AG04450 (cell line): ENCODE measurements at regions of chr6 and their contacts with region 1.

Region 1: DNA sequence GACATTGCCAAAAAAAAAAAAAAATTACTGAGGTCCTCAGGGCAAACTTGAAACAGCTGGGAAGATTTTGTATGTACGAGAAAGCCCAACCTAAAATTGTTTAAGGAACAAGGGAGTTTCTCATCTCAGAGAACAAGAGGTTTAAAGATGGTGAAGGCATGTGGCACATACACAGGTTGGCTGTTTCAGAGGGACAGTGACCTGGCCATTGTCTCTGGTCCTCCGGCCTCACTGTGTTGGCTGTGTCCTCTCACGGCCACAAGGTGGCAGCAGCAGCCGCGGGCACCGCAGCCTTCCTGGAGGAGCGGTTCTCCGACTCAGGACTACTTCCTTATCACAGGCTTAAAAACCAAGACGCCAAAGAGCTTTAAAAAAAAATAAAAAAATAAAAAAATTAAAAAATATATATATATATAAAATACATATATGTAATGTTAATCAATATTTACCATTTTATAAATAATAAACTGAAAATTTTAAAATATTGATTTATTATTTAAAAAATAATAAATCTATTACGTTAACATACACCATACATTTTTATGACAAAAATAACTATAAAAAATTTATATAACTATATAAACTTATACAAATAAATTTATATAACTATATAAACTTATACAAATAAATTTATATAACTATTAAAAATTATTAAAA is 52.8 kb downstream of the GTF2H5 start:
- DNase-seq: no peak
- H3K4me3 ChIP-seq: no peak overlapping the region
- H3K27ac ChIP-seq: no peak overlapping the region
- H3K27me3 ChIP-seq: no peaks in the 10 kb centered on the region
- CTCF ChIP-seq: peak; percentile 92

Region 2: DNA sequence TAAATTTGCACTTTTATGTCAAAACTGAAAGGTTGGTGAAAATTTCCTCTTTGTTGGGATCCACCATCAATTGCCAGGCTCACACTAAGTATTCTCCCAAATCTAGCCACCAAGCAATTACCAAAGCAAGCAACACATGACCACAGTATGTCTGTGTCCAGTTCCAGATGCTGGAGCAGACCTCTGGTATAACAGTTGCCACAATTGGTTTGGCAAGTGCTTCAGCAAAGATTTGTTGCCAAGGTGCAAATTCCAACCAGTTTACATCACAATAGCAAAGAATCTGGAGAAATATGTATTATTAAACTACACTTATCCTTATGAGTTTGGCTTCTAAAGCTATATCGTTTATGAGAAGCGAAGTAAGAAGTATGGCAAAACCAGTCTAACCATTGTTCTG is 46.4 kb before region 1 on chr6:
- CTCF ChIA-PET with region 1: no interaction called
- POLR2A ChIA-PET with region 1: no interaction called
- DNase-seq: peak; percentile 80
- H3K4me3 ChIP-seq: no peak overlapping the region
- H3K27ac ChIP-seq: no peak overlapping the region
- H3K27me3 ChIP-seq: no peaks in the 10 kb centered on the region
- CTCF ChIP-seq: no peak

Region 3: DNA sequence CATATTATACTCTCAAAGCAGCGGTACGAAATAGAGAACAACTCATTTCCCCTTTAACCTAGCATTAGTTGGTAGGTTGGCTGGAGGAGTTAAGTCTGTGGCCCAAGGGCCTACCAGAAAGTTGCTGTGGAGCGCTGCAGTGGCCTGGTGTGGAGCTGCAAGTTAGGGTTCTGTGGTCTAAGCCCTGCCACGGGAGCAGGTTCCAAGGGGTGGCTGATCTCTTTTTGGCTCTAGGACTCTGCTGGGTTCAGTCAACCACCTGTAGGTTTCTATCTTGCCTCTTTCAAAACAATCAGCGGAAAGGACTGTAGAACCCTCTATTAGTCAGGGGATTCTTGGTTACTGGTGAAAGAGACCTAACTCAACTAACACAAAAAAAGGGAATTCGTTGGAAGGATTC is 36.9 kb after region 1 on chr6:
- CTCF ChIA-PET with region 1: interaction called, 10 read pairs
- POLR2A ChIA-PET with region 1: no interaction called
- DNase-seq: no peak
- H3K4me3 ChIP-seq: no peak overlapping the region
- H3K27ac ChIP-seq: no peak overlapping the region
- H3K27me3 ChIP-seq: no peaks in the 10 kb centered on the region
- CTCF ChIP-seq: no peak

Region 4: GRCh38 chr6:158312672-158313397 is 91.9 kb after region 1 on chr6:
- CTCF ChIA-PET with region 1: no interaction called
- POLR2A ChIA-PET with region 1: no interaction called
- DNase-seq: no peak
- H3K4me3 ChIP-seq: no peak overlapping the region
- H3K27ac ChIP-seq: no peak overlapping the region
- H3K27me3 ChIP-seq: no peaks in the 10 kb centered on the region
- CTCF ChIP-seq: no peak

Region 5: GRCh38 chr6:158496700-158497099 is 275.8 kb after region 1 on chr6:
- CTCF ChIA-PET with region 1: interaction called, 11 read pairs
- POLR2A ChIA-PET with region 1: no interaction called
- DNase-seq: no peak
- H3K4me3 ChIP-seq: no peak overlapping the region
- H3K27ac ChIP-seq: no peak overlapping the region
- H3K27me3 ChIP-seq: no peaks in the 10 kb centered on the region
- CTCF ChIP-seq: no peak

Region 6: DNA sequence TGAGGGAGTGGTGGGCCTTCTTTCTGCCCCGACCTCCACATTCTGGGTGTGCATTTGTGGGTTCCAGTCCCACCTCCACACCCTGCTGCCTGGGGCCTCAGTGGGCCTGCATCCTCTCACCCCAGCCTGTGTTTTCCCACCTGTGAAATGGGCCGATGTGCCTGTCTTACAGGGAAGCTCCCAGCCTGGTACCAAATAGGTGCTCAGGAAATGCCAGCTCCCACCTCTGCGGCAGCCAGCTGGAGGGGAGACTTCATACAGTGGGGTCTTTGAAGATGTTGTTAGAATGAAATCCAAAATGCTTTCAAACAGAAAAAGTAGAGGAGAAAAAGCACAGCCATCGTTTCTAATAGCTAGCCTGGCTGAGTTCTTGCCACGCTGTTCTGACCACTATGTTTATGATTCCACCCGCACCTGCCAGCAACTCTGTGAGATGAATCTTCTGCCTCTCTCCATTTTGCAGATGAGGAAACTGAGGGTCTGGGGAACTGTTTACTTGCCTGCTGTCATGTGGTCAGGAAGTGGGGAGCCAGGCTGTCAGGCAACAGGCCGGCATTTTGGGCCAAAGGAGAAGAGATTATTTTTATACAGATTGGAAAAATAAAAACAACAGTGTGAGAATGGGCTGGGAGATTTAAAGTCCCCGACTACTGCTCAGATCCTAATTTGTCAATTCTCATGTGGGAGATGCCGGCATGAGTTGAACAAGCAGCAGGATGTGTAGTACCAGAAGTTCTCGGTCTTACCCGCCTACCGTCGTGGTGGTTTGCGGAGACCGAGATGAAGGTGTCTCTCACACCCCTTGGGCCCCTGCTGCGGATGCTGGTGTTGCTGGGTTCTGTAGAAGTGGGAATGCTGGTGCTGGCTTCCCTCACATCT is 343.6 kb after region 1 on chr6:
- CTCF ChIA-PET with region 1: interaction called, 17 read pairs
- POLR2A ChIA-PET with region 1: no interaction called
- DNase-seq: no peak
- H3K4me3 ChIP-seq: no peak overlapping the region
- H3K27ac ChIP-seq: no peak overlapping the region
- H3K27me3 ChIP-seq: no peaks in the 10 kb centered on the region
- CTCF ChIP-seq: no peak

Region 7: GRCh38 chr6:158605266-158605878 is 384.5 kb after region 1 on chr6:
- CTCF ChIA-PET with region 1: interaction called, 111 read pairs
- POLR2A ChIA-PET with region 1: no interaction called
- DNase-seq: peak; percentile 46
- H3K4me3 ChIP-seq: no peak overlapping the region
- H3K27ac ChIP-seq: no peak overlapping the region
- H3K27me3 ChIP-seq: no peaks in the 10 kb centered on the region
- CTCF ChIP-seq: peak; percentile 77